ENCODE measurements at regions of chr19 and their contacts with region 1.

Region 1: GRCh38 chr19:14103310-14103709 is 12.8 kb upstream of the SAMD1 start:
- DNase-seq: no peak
- ATAC-seq: peak; percentile 56
- H3K4me3 ChIP-seq: no peak overlapping the region
- H3K27ac ChIP-seq: no peak overlapping the region
- H3K4me1 ChIP-seq: no peaks in the 10 kb centered on the region
- H3K27me3 ChIP-seq: no peaks in the 10 kb centered on the region
- CTCF ChIP-seq: no peak
- EP300 ChIP-seq: no peak
- POLR2A ChIP-seq: no peak
- RAD21 ChIP-seq: no peak

Region 2: DNA sequence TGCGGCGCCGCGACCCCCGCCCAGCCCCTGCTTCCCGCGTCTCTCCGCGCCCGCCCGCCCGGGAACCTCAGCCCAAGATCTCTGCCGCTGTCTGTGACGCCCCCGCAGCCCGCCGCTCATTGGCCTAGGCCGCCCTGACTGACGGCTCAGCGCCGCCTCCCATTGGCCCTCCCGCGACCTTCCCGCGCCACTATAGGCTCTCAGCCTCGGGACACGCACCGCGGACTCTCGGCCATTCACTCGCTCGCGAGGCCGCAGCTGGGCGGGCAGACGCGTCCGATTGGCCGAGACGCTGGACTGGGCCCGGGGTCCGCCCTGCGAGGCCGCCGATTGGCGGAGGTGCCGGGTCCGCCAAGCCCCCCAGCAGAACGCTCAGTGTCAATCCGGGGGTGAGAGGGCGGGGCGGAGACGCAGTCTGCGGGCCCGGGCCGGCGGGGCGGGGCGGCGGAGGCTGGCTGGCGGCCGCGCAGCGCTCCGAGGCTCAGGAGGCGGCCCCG is 14.4 kb after region 1 on chr19 and contains the start of gene PRKACA:
- CTCF ChIA-PET with region 1: interaction called, 12 read pairs
- POLR2A ChIA-PET with region 1: interaction called, 3 read pairs
- RAD21 ChIA-PET with region 1: no interaction called
- SMC1A ChIA-PET with region 1: interaction called, 3 read pairs
- in situ Hi-C with region 1: no loop called
- intact Hi-C with region 1: no loop called
- DNase-seq: peak; percentile 91
- ATAC-seq: peak; percentile 99
- H3K4me3 ChIP-seq: peak within 1 kb of the TSS; percentile 70
- H3K27ac ChIP-seq: peak within 1 kb of the TSS; percentile 45
- H3K4me1 ChIP-seq: peaks cover 16% of the 10 kb centered on the region
- H3K27me3 ChIP-seq: no peaks in the 10 kb centered on the region
- CTCF ChIP-seq: no peak
- EP300 ChIP-seq: no peak
- POLR2A ChIP-seq: peak; percentile 54; the same call in 1 of the 2 replicates
- RAD21 ChIP-seq: no peak
- polyA plus RNA-seq, gene PRKACA: 0.53 to 1.3 TPM

Region 3: DNA sequence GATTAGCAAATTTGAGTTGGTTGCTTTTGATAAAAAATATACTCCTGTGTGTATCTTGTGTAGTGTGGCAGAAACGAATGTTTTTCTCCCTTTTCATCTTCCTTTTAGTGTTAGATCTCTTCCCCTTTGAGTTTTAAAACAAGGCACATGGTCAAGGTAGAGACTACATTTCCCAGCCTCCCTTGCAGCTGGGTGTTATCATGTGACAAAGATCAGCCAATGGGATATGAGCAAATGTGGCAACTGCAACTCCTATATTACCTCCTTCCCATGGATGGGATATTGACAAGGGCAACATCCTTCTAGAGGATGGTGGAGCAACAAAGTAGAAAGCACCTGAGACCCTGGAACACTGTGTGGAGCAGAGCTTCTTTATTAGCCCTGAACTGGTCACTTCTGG is 529.0 kb after region 1 on chr19:
- CTCF ChIA-PET with region 1: no interaction called
- POLR2A ChIA-PET with region 1: no interaction called
- RAD21 ChIA-PET with region 1: no interaction called
- SMC1A ChIA-PET with region 1: no interaction called
- in situ Hi-C with region 1: no loop called
- intact Hi-C with region 1: no loop called
- DNase-seq: peak; percentile 40
- ATAC-seq: peak; percentile 75
- H3K4me3 ChIP-seq: no peak overlapping the region
- H3K27ac ChIP-seq: no peak overlapping the region
- H3K4me1 ChIP-seq: no peaks in the 10 kb centered on the region
- H3K27me3 ChIP-seq: no peaks in the 10 kb centered on the region
- CTCF ChIP-seq: no peak
- EP300 ChIP-seq: no peak
- POLR2A ChIP-seq: no peak
- RAD21 ChIP-seq: no peak

Measured in GM12878 (cell line).